Activated CD4-positive, alpha-beta T cell treated with anti-CD3 and anti-CD28 coated beads, Interleukin-2, amount 10 ng/mL, durations not matched to agents 7 days and 5 days (primary cell): ENCODE measurements at regions of chr1 and their contacts with region 1.

Region 1: GRCh38 chr1:151340870-151341754 is 5.9 kb downstream of the RFX5 start:
- DNase-seq: peak; percentile 70
- H3K4me3 Mint-ChIP-seq: no peak overlapping the region
- H3K27ac Mint-ChIP-seq: no peak overlapping the region
- H3K4me1 Mint-ChIP-seq: peaks cover 27% of the 10 kb centered on the region
- H3K27me3 Mint-ChIP-seq: no peaks in the 10 kb centered on the region

Region 2: GRCh38 chr1:151292207-151293030 is 48.7 kb before region 1 on chr1:
- CTCF ChIA-PET with region 1: interaction called, 12 read pairs
- POLR2A ChIA-PET with region 1: no interaction called
- DNase-seq: no peak
- H3K4me3 Mint-ChIP-seq: no peak overlapping the region
- H3K27ac Mint-ChIP-seq: peak overlapping the region; percentile 54
- H3K4me1 Mint-ChIP-seq: peaks cover 6% of the 10 kb centered on the region
- H3K27me3 Mint-ChIP-seq: no peaks in the 10 kb centered on the region